ENCODE measurements at regions of chr6 and their contacts with region 1.

Region 1: GRCh38 chr6:49849213-49849907 is 17.0 kb downstream of the CRISP1 start:
- DNase-seq: peak; percentile 56
- H3K4me3 Mint-ChIP-seq: no peak overlapping the region
- H3K27ac Mint-ChIP-seq: no peak overlapping the region
- H3K4me1 Mint-ChIP-seq: no peaks in the 10 kb centered on the region
- H3K27me3 Mint-ChIP-seq: no peaks in the 10 kb centered on the region

Region 2: GRCh38 chr6:49531774-49532569 is 317.4 kb before region 1 on chr6:
- intact Hi-C with region 1: loop called (anchors 1 kb)
- DNase-seq: no peak
- H3K4me3 Mint-ChIP-seq: no peak overlapping the region
- H3K27ac Mint-ChIP-seq: no peak overlapping the region
- H3K4me1 Mint-ChIP-seq: peaks cover 2% of the 10 kb centered on the region
- H3K27me3 Mint-ChIP-seq: peaks cover 24% of the 10 kb centered on the region

Region 3: GRCh38 chr6:49606696-49607390 is 242.5 kb before region 1 on chr6:
- intact Hi-C with region 1: loop called (anchors 5 kb)
- DNase-seq: peak; percentile 73
- H3K4me3 Mint-ChIP-seq: no peak overlapping the region
- H3K27ac Mint-ChIP-seq: no peak overlapping the region
- H3K4me1 Mint-ChIP-seq: no peaks in the 10 kb centered on the region
- H3K27me3 Mint-ChIP-seq: peaks cover 3% of the 10 kb centered on the region

Region 4: DNA sequence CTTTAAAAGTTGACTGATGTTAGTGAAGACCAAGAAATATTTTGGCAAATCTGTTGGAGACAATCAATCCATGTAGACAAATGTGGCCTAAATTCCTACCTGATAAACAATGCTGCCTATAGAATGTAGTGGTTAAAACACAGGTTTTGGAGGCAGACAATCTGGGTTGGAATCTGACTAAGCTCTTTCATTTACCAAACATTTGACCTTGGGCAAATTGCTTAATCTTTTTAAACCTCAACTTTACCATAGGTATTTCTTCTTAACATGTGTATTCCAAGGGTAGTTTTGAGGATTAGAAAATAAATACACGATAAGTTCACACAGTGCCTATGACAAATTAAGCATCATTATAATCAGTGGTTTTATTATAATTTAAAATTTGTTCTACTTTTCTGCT is 224.2 kb before region 1 on chr6:
- intact Hi-C with region 1: loop called (anchors 1 kb)
- DNase-seq: no peak
- H3K4me3 Mint-ChIP-seq: no peak overlapping the region
- H3K27ac Mint-ChIP-seq: no peak overlapping the region
- H3K4me1 Mint-ChIP-seq: no peaks in the 10 kb centered on the region
- H3K27me3 Mint-ChIP-seq: no peaks in the 10 kb centered on the region